BJ (cell line): ENCODE measurements at regions of chr5 and their contacts with region 1.

Region 1: DNA sequence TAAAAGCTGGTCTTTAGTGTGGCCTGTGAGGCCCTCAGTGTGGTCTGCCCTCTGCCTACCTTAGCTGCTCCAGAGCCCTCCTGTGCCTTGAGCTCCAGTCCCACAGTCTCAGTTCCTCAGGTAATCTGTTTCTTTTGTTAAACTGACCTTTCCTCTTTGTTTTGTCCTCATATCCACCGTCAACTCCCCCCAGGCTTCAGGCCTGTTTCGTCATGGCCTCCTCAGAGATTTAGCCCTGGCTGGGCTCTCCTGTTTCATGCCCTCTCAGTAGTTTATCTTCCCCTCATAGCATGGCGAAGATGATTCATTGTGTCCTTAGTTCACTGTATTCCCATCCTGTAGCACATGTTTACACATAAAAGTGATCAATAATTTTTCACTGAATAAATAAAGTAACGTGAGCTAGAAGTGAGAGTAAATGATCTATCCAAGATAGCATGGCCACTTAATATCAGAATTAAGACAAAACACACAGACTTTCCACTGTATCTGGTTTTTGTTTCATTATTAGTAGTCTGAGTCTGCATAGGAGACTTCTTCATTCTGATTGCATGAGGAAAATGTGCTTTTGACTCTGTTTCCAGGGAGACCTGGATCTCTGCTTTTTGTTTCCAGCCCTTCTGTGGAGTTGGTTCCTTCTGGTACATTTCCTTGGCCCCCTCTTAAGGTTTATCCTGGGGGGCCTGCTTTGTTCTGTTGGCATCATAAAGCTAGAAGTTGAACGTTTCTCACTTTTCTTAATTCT is 70.5 kb downstream of the SNX24 start:
- DNase-seq: no peak
- H3K4me3 ChIP-seq: no peak overlapping the region
- H3K27me3 ChIP-seq: no peaks in the 10 kb centered on the region
- CTCF ChIP-seq: no peak

Region 2: DNA sequence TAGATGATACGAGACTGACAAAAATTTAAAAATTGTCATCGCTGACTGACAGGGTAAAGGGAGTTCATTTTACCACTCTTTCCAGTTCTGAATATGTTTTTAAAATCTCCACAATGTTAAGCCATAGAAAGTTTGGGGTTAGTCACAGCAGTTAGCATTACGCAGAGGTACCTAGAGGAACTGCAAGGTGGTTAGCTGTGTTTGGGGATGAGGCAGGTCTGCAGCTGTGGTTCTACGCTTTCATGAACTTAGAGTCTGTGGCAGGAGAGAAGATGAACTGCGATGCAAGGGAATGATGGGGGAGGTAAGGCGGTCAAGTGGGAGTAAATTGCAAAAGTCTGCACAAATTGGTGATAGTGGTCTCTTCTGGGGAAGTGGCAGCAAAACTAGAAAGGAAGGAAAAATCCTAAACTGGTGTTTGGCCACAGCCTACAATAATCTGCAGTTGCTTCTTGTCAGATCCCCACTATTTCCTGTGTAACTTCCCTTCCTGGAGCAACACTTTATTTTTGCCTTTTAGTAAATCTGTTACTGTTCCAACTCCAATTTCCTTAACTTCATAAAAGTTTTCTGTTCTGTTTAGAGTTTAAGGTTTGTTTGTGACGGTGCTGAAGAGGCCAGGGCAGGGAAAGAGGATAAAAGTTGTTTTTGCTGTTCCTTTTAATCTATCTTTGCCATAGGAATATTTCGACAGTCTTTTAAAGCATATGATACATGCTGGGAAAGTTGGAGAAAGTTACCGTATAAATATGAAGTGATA is 179.6 kb before region 1 on chr5:
- CTCF ChIA-PET with region 1: no interaction called
- POLR2A ChIA-PET with region 1: interaction called, 13 read pairs
- DNase-seq: no peak
- H3K4me3 ChIP-seq: no peak overlapping the region
- H3K27me3 ChIP-seq: no peaks in the 10 kb centered on the region
- CTCF ChIP-seq: no peak

Region 3: GRCh38 chr5:122951658-122952057 is 35.8 kb after region 1 on chr5:
- CTCF ChIA-PET with region 1: no interaction called
- POLR2A ChIA-PET with region 1: no interaction called
- DNase-seq: no peak
- H3K4me3 ChIP-seq: no peak overlapping the region
- H3K27me3 ChIP-seq: no peaks in the 10 kb centered on the region
- CTCF ChIP-seq: no peak